ENCODE measurements at regions of chr10 and their contacts with region 1.

Region 1: DNA sequence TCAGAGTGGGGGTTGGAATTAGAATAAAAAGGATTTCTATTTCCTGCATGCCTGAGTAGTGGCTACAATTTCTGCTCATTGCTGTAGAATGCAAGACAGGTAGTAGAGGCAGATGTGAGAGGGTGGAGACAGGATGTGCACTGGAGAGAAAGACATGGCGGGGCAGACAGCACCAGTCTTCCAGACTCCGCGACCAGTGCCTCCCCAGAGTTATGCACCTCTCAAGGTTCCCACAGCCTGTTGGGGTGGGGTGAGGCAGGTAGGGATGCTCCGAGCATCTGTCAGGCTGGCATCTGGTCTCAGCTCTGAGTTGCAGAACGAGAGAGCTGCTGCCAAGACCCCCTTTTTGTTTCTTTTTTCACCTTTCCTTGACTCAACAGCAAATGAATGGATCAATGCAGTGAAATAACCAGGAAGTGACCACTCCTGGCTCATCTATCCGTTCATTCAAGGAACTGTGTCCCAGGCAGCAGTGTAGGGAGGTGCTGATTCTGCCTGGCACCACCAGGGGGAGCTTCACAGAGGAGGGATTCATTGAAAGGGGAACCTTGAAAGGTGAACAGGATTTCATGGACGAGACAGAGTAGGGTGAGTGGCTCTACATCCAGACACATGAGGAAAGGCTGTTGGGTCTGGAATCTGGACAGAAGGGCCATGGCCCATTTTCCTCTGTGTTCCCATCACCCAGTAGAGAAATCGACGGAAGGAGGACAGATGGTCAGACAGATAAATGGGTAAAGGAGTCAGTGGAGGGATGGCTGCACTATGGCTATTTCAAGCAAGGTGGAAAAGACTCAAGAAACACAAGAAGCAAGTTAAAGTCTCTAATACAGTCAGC is 17.2 kb upstream of the SLC18A3 start:
- DNase-seq: peak in 8 of 10 donors; percentile 53 to 92 (median 64)

Region 2: GRCh38 chr10:50226610-50227009 is 633.7 kb after region 1 on chr10:
- intact Hi-C with region 1: loop called (anchors 5 kb)
- DNase-seq: no peak